Endothelial cell of umbilical vein (primary cell): ENCODE measurements at regions of chr6 and their contacts with region 1.

Region 1: GRCh38 chr6:73520688-73521350 is at the start of gene EEF1A1:
- DNase-seq: peak; percentile 100
- H3K4me3 ChIP-seq: peak within 1 kb of the TSS; percentile 85 to 99 (median 95)
- H3K27ac ChIP-seq: peak within 1 kb of the TSS; percentile 100
- H3K4me1 ChIP-seq: peaks cover 34% of the 10 kb centered on the region
- H3K27me3 ChIP-seq: no peaks in the 10 kb centered on the region
- CTCF ChIP-seq: no peak
- POLR2A ChIP-seq: peak; percentile 100
- total RNA-seq, gene EEF1A1: 9,186 and 9,456 TPM in 2 replicates

Region 2: DNA sequence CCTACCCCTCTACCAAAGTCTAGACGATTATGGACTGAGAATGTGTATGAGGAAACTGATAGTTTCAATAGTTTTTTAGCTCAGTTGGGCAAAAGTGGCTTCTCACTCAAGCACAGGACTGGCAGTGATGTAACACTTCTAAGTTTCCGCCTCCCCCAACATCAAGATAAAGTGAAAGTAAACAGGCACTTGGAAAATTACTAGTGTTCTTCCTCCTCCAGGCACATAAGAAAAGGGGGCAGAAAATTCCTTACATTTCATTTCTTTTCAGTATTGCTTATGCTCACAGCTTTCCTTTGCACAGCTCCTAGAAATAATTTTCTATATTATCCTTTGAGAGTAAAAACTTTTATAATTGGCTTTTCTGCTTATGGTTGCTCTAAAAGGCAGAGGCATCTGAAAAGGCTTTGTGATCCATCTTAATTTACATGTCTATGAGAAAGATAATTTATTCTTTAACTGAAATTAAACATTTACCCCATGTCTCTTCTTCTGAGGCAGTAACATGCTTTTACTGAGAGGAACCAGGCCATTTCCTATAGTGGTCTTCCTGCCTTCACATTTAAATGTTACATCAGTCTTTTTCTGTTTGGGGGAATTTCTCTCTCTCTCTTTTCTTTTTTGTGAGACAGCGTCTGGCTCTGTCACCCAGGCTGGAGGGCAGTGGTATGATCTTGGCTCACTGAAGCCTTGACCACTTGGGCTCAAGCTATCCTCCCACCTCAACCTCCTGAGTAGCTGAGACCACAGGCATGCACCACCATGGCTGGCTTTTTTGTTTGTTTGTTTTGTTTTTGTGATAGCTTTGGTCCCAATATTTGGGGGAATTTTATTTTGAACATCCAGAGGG is 65.0 kb after region 1 on chr6:
- CTCF ChIA-PET with region 1: interaction called, 32 read pairs
- POLR2A ChIA-PET with region 1: interaction called, 74 read pairs
- dilution Hi-C with region 1: loop called (anchors 10 kb)
- intact Hi-C with region 1: loop called (anchors 1 kb)
- DNase-seq: peak; percentile 91
- H3K4me3 ChIP-seq: peak overlapping the region in 2 of 3 experiments; percentile 11 to 49
- H3K27ac ChIP-seq: peak overlapping the region; percentile 95
- H3K4me1 ChIP-seq: peaks cover 28% of the 10 kb centered on the region
- H3K27me3 ChIP-seq: no peaks in the 10 kb centered on the region
- CTCF ChIP-seq: no peak
- POLR2A ChIP-seq: no peak

Region 3: GRCh38 chr6:73898624-73899023 is 377.8 kb after region 1 on chr6:
- CTCF ChIA-PET with region 1: no interaction called
- POLR2A ChIA-PET with region 1: no interaction called
- dilution Hi-C with region 1: no loop called
- intact Hi-C with region 1: no loop called
- DNase-seq: no peak
- H3K4me3 ChIP-seq: no peak overlapping the region
- H3K27ac ChIP-seq: no peak overlapping the region
- H3K4me1 ChIP-seq: no peaks in the 10 kb centered on the region
- H3K27me3 ChIP-seq: peaks cover 4 to 7% of the 10 kb centered on the region in 2 experiments
- CTCF ChIP-seq: no peak
- POLR2A ChIP-seq: no peak